PC-3 (cell line): ENCODE measurements at regions of chr6 and their contacts with region 1.

Region 1: GRCh38 chr6:3825851-3826581 is 23.2 kb upstream of the FAM50B start:
- DNase-seq: peak; percentile 97
- ATAC-seq: peak; percentile 94
- H3K4me3 ChIP-seq: peak overlapping the region; percentile 38; the same call in 1 of the 2 replicates
- H3K27ac ChIP-seq: peak overlapping the region; percentile 84
- H3K4me1 ChIP-seq: peaks cover 45% of the 10 kb centered on the region
- H3K27me3 ChIP-seq: no peaks in the 10 kb centered on the region
- CTCF ChIP-seq: no peak

Region 2: GRCh38 chr6:3759646-3760232 is 66.3 kb before region 1 on chr6:
- CTCF ChIA-PET with region 1: no interaction called
- POLR2A ChIA-PET with region 1: no interaction called
- intact Hi-C with region 1: no loop called
- DNase-seq: no peak
- ATAC-seq: no peak
- H3K4me3 ChIP-seq: no peak overlapping the region
- H3K27ac ChIP-seq: no peak overlapping the region
- H3K4me1 ChIP-seq: no peaks in the 10 kb centered on the region
- H3K27me3 ChIP-seq: no peaks in the 10 kb centered on the region
- CTCF ChIP-seq: no peak

Region 3: GRCh38 chr6:3808759-3809514 is 17.1 kb before region 1 on chr6:
- CTCF ChIA-PET with region 1: interaction called, 3 read pairs
- POLR2A ChIA-PET with region 1: interaction called, 6 read pairs
- intact Hi-C with region 1: loop called (anchors 2 kb)
- DNase-seq: peak; percentile 95
- ATAC-seq: peak; percentile 89
- H3K4me3 ChIP-seq: peak overlapping the region; percentile 10; the same call in 1 of the 2 replicates
- H3K27ac ChIP-seq: peak overlapping the region; percentile 67
- H3K4me1 ChIP-seq: peaks cover 60% of the 10 kb centered on the region
- H3K27me3 ChIP-seq: no peaks in the 10 kb centered on the region
- CTCF ChIP-seq: no peak; the same call in 1 of the 2 replicates

Region 4: DNA sequence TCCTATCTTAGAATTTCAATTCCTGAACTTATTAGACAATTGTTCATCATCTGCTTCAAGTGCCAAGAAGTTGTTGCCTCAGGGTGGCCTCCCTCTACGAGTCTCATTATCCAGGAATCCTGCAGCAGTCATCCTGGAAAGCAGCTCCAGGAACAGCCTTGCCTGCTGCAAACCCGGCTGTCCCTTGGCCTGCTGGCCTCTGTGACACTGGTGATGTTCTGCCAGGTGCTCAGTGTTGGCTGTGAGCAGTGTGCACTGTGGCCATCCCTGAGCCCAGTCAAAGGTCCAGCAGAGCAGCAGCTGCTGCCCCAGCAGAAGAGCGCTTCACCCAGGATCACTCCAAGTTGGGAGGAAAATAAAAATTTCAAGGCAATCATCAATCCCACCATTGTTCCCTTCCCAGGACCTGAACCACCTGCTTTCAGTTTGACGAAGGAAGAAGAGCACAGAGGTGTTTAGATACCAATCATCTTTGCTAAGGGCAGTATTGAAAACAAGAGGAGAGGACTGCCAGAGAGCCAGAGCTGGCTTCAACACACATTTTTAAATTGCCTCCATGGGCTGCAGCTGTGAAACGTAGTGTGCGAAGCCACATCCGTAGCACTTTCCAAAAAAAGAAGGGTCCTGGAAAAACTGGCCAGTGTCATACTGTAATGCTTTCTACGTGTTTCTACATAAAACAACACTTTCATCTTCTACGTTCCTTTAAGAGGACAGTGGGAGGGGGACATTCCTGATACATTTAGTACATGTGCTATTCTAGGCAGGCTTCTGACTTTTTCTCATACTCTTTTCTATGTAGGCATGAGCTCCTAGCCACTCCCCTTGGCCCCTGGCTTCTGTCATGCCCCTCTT is 15.9 kb after region 1 on chr6:
- CTCF ChIA-PET with region 1: no interaction called
- POLR2A ChIA-PET with region 1: no interaction called
- intact Hi-C with region 1: loop called (anchors 1 kb)
- DNase-seq: peak; percentile 88
- ATAC-seq: peak; percentile 72
- H3K4me3 ChIP-seq: no peak overlapping the region
- H3K27ac ChIP-seq: no peak overlapping the region
- H3K4me1 ChIP-seq: peaks cover 48% of the 10 kb centered on the region
- H3K27me3 ChIP-seq: no peaks in the 10 kb centered on the region
- CTCF ChIP-seq: no peak